Activated CD4-positive, alpha-beta T cell treated with anti-CD3 and anti-CD28 coated beads, Interleukin-2, amount 10 ng/mL, durations not matched to agents 24 days and 14 days (primary cell): ENCODE measurements at regions of chrX and their contacts with region 1.

Region 1: GRCh38 chrX:132622130-132622529 is 133.3 kb upstream of the MBNL3 start:
- DNase-seq: peak; percentile 62
- H3K4me3 Mint-ChIP-seq: no peak overlapping the region
- H3K27ac Mint-ChIP-seq: peak overlapping the region; percentile 66
- H3K4me1 Mint-ChIP-seq: peaks cover 5% of the 10 kb centered on the region
- H3K27me3 Mint-ChIP-seq: no peaks in the 10 kb centered on the region

Region 2: DNA sequence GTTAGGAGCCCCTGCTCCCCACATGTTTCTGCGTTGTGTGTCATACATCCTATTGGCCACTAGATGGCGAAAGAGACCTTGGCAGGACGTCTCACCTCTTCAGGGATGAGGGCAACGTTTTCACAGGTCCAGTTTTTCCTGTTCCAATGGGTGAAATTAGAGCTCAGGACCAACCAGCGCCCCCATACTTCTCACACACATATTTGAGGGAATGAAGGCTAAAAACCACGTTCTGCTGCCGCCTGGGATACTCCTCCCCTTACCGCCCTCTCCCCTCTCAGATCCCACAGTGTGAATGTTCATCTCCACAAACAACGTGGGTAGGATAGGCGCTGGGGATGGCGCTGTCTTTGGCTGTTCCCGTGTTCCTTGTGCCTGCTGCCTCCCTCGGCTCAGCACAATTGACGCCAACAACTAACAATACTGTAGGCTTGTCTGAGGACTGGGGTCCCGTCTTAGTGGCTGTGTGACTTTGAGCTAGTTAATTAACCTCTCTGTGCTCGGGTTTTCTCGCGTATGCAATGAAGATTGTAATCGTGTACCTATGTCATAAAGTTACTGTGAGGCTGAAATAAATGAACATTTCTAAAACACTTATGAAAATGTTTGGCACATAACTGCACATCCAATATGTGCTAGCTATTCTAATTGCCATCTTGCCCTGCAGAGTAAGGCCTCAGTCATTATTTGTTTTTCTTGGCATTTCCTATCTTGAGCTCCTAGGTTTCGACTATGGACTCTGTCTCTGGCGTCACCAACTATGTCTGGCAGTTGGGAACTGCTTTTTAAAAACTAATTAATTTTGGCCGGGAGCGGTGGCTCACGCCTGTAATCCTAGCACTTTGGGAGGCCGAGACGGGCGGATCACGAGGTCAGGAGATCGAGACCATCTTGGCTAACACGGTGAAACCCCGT is 780.4 kb before region 1 on chrX:
- intact Hi-C with region 1: loop called (anchors 2 kb)
- DNase-seq: peak; percentile 79
- H3K4me3 Mint-ChIP-seq: no peak overlapping the region
- H3K27ac Mint-ChIP-seq: no peak overlapping the region
- H3K4me1 Mint-ChIP-seq: peaks cover 3% of the 10 kb centered on the region
- H3K27me3 Mint-ChIP-seq: no peaks in the 10 kb centered on the region

Region 3: GRCh38 chrX:132480581-132481203 is 141.4 kb before region 1 on chrX:
- intact Hi-C with region 1: loop called (anchors 5 kb)
- DNase-seq: peak; percentile 77
- H3K4me3 Mint-ChIP-seq: peak overlapping the region; percentile 84
- H3K27ac Mint-ChIP-seq: peak overlapping the region; percentile 94
- H3K4me1 Mint-ChIP-seq: peaks cover 17% of the 10 kb centered on the region
- H3K27me3 Mint-ChIP-seq: no peaks in the 10 kb centered on the region

Region 4: GRCh38 chrX:132676561-132677186 is 54.5 kb after region 1 on chrX:
- intact Hi-C with region 1: no loop called
- DNase-seq: peak; percentile 45
- H3K4me3 Mint-ChIP-seq: no peak overlapping the region
- H3K27ac Mint-ChIP-seq: no peak overlapping the region
- H3K4me1 Mint-ChIP-seq: peaks cover 3% of the 10 kb centered on the region
- H3K27me3 Mint-ChIP-seq: no peaks in the 10 kb centered on the region